GM18951 (cell line): ENCODE measurements at regions of chr1 and their contacts with region 1.

Region 1: GRCh38 chr1:43358746-43359693 is at the start of gene CDC20:
- POLR2A ChIP-seq: peak; percentile 78

Region 2: GRCh38 chr1:43238085-43238484 is 120.9 kb before region 1 on chr1:
- in situ Hi-C with region 1: loop called (anchors 10 kb)
- POLR2A ChIP-seq: no peak